ENCODE measurements at regions of chr13 and their contacts with region 1.

Region 1: DNA sequence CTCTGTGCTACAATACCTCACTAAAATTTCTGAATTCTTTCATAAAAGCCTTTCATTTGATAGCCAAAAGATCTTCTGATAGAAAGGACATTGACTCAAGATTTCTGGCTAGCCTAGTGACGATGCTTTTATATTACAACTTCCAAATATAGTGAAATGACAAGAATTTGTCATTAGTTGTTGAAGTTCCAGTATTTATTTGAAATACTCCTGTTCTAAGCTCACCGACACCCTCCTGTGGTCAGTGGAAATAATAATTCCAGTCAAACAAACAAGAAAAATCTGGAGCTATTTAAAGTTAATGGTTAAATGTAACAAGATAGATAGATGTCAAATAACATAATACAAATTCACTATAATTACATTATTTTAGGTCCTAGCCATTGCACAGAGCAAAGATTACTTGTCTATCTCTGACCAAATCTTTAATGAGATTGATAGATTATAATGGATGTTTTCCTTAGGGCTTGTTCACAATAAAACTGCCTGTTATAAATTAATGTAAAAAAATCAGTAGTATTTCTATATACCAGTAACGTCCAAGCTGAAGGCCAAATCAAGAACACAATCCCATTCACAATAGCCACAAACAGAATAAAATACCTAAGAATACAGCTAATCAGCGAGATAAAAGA is 195.5 kb downstream of the RGCC start:
- DNase-seq: peak; percentile 88
- H3K4me3 ChIP-seq: no peak overlapping the region
- H3K27ac ChIP-seq: peak overlapping the region; percentile 43
- H3K4me1 ChIP-seq: peaks cover 27% of the 10 kb centered on the region
- H3K27me3 ChIP-seq: no peaks in the 10 kb centered on the region
- CTCF ChIP-seq: peak; percentile 12 to 44
- POLR2A ChIP-seq: no peak

Region 2: DNA sequence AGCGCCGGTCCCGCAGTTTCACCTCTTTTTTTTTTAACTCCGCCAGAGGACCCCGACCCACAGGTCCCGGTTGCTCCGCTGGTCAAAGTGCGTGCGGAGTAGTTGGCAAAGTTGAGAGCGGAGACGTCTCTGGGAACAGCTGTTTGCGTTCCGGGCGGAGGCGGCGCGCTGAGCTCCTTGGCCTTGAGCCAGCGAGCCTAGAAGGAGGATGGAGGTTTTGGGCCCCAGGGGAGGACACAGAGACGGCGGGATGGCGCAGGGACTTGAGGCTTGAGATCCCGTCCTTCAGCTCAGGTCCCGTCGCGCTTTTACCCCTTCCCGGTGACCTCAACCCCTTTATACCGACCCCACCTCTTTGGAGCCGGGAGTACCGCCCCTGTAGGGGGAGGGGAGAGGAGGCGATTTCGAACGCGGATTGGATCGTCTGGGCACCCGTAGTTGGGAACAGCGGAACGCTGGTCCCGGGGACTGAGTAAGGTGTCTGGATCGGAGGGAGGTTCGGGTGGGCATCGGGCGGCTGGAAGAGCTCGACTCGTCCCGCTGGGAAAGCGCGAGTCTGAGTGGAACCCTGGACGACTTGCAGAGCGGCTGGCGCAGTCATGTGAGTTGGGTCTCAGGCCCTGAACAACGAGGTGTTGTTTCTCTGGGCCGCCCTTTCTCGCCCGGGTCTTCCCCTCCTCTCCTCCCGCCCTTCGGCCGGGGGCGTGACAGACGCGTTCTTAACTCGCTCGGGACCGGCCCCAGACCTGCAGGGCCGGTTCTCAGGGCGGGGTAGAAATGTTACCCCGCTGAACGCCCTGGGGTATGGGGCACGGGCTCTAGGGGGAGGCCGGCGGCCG is 591.5 kb before region 1 on chr13 and contains the start of gene WBP4:
- CTCF ChIA-PET with region 1: no interaction called
- POLR2A ChIA-PET with region 1: no interaction called
- dilution Hi-C with region 1: no loop called
- intact Hi-C with region 1: loop called (anchors 5 kb)
- DNase-seq: peak; percentile 96
- H3K4me3 ChIP-seq: peak within 1 kb of the TSS; percentile 56 to 96 (median 71)
- H3K27ac ChIP-seq: peak within 1 kb of the TSS; percentile 93
- H3K4me1 ChIP-seq: peaks cover 49% of the 10 kb centered on the region
- H3K27me3 ChIP-seq: no peaks in the 10 kb centered on the region
- CTCF ChIP-seq: peak in 1 of 2 donors; percentile 25
- POLR2A ChIP-seq: peak; percentile 63
- total RNA-seq, gene WBP4: 14.4 and 14.8 TPM in 2 replicates

Region 3: GRCh38 chr13:41310963-41311606 is 341.8 kb before region 1 on chr13 and contains the start of gene NAA16:
- CTCF ChIA-PET with region 1: interaction called, 4 read pairs
- POLR2A ChIA-PET with region 1: no interaction called
- dilution Hi-C with region 1: no loop called
- intact Hi-C with region 1: loop called (anchors 2 kb)
- DNase-seq: peak; percentile 93
- H3K4me3 ChIP-seq: peak within 1 kb of the TSS; percentile 92 to 95 (median 94)
- H3K27ac ChIP-seq: peak within 1 kb of the TSS; percentile 72
- H3K4me1 ChIP-seq: peaks cover 36% of the 10 kb centered on the region
- H3K27me3 ChIP-seq: no peaks in the 10 kb centered on the region
- CTCF ChIP-seq: no peak
- POLR2A ChIP-seq: peak; percentile 84
- total RNA-seq, gene NAA16: 24.1 and 26.1 TPM in 2 replicates

Region 4: DNA sequence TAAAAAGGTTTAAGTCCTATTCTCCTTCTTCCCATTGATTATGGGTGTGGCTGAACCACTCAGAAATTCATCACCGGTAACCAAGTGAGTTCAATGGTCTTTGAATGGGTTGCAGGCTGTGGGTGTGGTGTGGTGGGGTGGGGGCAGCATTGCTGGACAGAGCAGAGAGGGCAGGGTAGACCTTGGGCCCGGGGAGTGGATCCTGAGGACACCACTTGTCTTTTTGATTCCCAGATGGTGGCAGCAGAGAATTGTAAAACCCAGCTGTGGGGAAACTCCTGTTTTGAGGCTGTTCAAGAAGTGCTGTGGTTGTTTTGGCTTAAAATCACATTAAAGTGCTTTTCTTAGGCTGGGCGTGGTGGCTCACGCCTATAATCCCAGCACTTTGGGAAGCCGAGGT is 241.3 kb before region 1 on chr13:
- CTCF ChIA-PET with region 1: interaction called, 35 read pairs
- POLR2A ChIA-PET with region 1: no interaction called
- dilution Hi-C with region 1: no loop called
- intact Hi-C with region 1: loop called (anchors 1 kb)
- DNase-seq: peak; percentile 32
- H3K4me3 ChIP-seq: no peak overlapping the region
- H3K27ac ChIP-seq: no peak overlapping the region
- H3K4me1 ChIP-seq: no peaks in the 10 kb centered on the region
- H3K27me3 ChIP-seq: peaks cover 0 to 4% of the 10 kb centered on the region in 2 experiments
- CTCF ChIP-seq: peak in 1 of 2 donors; percentile 5
- POLR2A ChIP-seq: no peak

Region 5: DNA sequence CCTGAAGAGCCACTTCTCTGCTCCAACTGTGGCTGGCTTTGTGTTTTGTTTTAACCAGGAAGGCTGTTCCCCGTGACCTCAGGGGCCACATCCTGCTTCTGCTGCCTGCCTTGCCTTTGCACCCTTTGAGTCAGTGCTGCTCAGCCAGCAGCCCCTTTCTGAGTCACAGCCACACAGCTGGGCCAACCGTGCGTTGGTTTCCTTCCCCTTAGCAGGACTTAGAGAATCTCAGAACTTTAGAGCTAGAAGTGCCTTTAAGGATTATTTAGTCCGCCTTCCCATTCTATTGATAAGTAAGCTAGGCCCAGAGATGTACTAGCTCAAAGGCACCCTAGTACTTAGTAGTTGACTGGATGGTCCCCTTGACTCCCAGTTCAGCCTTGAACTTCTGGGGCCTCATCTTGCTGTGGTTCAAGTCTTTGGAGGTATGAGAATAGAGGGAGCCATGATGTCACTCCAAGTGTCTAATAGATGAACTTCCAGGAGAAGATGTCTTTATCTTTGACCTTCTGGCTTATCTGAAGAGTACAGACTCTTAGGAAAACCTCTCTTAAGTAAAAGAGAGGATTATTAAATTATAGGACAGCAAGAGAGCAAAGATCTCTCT is 187.5 kb before region 1 on chr13:
- CTCF ChIA-PET with region 1: interaction called, 97 read pairs
- POLR2A ChIA-PET with region 1: interaction called, 4 read pairs
- dilution Hi-C with region 1: no loop called
- intact Hi-C with region 1: loop called (anchors 1 kb)
- DNase-seq: peak; percentile 96
- H3K4me3 ChIP-seq: no peak overlapping the region
- H3K27ac ChIP-seq: peak overlapping the region; percentile 86
- H3K4me1 ChIP-seq: peaks cover 37% of the 10 kb centered on the region
- H3K27me3 ChIP-seq: no peaks in the 10 kb centered on the region
- CTCF ChIP-seq: no peak
- POLR2A ChIP-seq: peak; percentile 36

Region 6: GRCh38 chr13:41596190-41596589 is 56.7 kb before region 1 on chr13:
- CTCF ChIA-PET with region 1: interaction called, 42 read pairs
- POLR2A ChIA-PET with region 1: no interaction called
- dilution Hi-C with region 1: no loop called
- intact Hi-C with region 1: loop called (anchors 1 kb)
- DNase-seq: peak; percentile 70
- H3K4me3 ChIP-seq: no peak overlapping the region
- H3K27ac ChIP-seq: peak overlapping the region; percentile 38
- H3K4me1 ChIP-seq: peaks cover 12% of the 10 kb centered on the region
- H3K27me3 ChIP-seq: no peaks in the 10 kb centered on the region
- CTCF ChIP-seq: peak in 1 of 2 donors; percentile 10
- POLR2A ChIP-seq: no peak

Region 7: GRCh38 chr13:41694545-41695301 is 41.9 kb after region 1 on chr13:
- CTCF ChIA-PET with region 1: no interaction called
- POLR2A ChIA-PET with region 1: no interaction called
- dilution Hi-C with region 1: no loop called
- intact Hi-C with region 1: loop called (anchors 2 kb)
- DNase-seq: peak; percentile 93
- H3K4me3 ChIP-seq: peak overlapping the region in 1 of 3 experiments; percentile 30
- H3K27ac ChIP-seq: peak overlapping the region; percentile 88
- H3K4me1 ChIP-seq: peaks cover 34% of the 10 kb centered on the region
- H3K27me3 ChIP-seq: no peaks in the 10 kb centered on the region
- CTCF ChIP-seq: no peak
- POLR2A ChIP-seq: no peak